ENCODE measurements at regions of chr19 and their contacts with region 1.

Region 1: GRCh38 chr19:58305065-58305931 is at the start of gene ERVK3-1:
- DNase-seq: peak; percentile 93 to 99 (median 97)

Region 2: DNA sequence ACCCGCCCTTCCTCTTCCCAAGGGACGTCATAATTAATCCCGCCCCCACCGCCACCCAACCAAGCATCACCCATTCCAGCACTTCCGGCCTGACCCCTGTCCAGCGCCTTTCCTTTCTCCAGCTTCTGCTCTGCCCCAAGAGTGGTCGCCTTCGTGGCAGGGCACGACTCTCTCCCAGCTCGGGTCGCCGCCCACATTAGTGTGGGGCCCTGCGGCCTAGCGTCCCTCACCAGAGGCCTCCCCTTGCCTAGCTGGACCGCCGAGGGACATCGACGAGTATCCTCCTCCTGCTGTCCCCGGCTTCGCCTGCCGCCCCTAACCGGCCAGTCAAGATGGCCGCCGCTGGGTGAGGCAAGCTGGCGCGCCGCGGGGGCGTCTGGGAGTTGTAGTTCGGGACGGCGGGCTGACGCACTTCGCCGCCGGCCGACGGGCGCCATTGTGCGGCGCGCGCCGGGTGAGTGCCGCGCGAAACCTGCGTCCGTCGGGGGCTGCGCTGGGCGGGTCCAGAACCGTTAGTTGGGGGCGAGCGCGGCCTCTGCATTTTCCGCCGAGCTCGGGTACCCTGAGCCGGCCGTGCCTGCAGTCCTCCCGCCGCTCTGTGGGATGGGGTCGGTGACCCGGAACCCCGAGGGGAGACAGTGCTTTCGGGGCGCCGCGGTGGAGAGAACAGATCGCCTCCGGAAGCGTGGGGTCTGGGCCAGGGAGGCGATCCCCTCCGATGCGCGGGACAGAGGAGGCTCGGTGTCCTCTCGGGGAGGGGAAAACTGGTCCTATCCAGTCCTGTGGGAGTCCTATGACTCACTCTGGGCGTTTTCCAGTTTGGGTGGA is 122.1 kb before region 1 on chr19 and contains the start of gene ZNF274:
- intact Hi-C with region 1: loop called (anchors 10 kb)
- DNase-seq: peak; percentile 77 to 97 (median 92)

Region 3: GRCh38 chr19:58326914-58327726 is 21.8 kb after region 1 on chr19 and contains the start of gene ZSCAN22:
- intact Hi-C with region 1: loop called (anchors 2 kb)
- DNase-seq: peak; percentile 96 to 99 (median 98)